CD14-positive monocyte (primary cell): ENCODE measurements at regions of chr16 and their contacts with region 1.

Region 1: DNA sequence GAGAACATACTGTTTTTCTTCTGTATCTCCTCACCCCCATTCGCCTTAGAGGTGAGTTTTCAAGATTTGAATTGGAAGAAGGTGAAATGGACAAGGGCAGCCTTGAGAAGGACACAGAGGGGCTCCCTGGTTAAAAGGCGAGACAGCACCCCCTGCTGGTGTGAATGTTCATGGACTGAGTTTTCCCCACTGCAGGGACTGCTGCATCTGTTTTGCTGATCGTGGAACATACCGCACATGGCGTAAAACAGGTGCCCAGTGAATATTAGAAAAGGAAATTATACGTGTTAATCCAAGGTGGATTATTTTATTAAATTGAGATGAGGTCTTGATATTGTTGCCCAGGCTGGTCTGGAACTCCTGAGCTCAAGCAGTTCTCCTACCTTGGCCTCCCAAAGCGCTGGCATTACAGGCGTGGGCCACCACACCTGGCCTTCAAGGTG is 54.5 kb downstream of the NDE1 start:
- DNase-seq: peak; percentile 51 to 65 (median 61)
- H3K4me3 ChIP-seq: no peak overlapping the region
- H3K4me3 Mint-ChIP-seq: no peak overlapping the region
- H3K27ac ChIP-seq: peak overlapping the region in 1 of 2 donors; percentile 4
- H3K27ac Mint-ChIP-seq: peak overlapping the region in 2 of 7 donors; percentile 7 to 24
- H3K4me1 ChIP-seq: no peaks in the 10 kb centered on the region
- H3K4me1 Mint-ChIP-seq: peaks cover 2% of the 10 kb centered on the region
- H3K27me3 ChIP-seq: no peaks in the 10 kb centered on the region
- H3K27me3 Mint-ChIP-seq: peaks cover 0 to 3% (median 2%) of the 10 kb centered on the region in 3 donors
- CTCF ChIP-seq: peak; percentile 89

Region 2: DNA sequence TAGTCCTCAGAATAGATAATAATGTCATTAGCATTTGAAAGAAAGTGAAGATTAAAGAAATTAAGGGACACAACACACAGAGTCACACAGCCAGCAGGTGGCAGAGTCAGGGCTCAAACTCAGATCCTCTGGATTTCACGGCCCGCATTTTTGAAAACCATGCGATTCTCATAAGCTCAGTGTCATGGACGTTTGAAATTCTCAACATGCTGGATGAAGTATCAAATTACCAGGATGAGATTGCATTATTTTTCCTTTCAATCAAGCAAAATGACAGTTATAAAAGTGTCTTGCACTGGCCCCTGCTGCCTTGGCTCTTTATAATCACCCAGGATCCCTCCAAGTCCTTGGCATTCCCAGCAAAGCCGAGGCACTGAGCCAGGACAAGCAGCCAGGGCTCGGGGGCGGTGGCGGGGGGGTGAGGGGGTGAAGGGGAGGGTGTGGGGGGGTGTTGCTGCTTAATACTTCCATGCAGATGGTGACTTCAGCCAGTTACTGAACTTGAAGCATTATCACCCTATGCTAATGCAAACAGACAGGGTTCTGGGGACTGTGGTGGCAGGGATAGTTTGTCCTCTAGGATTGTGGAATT is 276.8 kb before region 1 on chr16:
- intact Hi-C with region 1: loop called (anchors 5 to 10 kb)
- DNase-seq: peak; percentile 30 to 40 (median 38)
- H3K4me3 ChIP-seq: no peak overlapping the region
- H3K4me3 Mint-ChIP-seq: no peak overlapping the region
- H3K27ac ChIP-seq: no peak overlapping the region
- H3K27ac Mint-ChIP-seq: no peak overlapping the region
- H3K4me1 ChIP-seq: no peaks in the 10 kb centered on the region
- H3K4me1 Mint-ChIP-seq: peaks cover 2% of the 10 kb centered on the region
- H3K27me3 ChIP-seq: peaks cover 0 to 1% of the 10 kb centered on the region in 2 donors
- H3K27me3 Mint-ChIP-seq: peaks cover 3 to 13% (median 3%) of the 10 kb centered on the region in 3 donors
- CTCF ChIP-seq: peak; percentile 62